ENCODE measurements at regions of chr4 and their contacts with region 1.

Region 1: DNA sequence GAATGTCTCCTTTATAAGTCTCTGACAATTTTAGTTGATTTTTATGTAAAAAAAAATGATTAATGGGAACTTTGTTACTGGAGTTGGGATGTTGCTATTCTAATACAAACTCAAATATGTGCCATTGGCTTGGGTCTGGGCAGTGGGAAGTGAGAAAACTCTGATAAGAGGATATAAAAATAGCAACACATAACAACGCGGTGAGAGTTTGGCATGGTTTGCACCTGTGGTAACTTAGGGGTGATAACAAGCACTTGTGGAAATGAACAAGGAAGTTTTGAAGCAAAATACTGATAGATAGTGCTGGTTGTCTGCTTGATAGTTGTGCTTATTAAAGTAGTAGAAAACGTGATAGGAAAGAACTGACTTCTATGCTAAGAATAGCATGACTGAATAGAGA is 743.3 kb upstream of the AGA start:
- DNase-seq: no peak

Region 2: GRCh38 chr4:178198691-178199090 is 13.2 kb after region 1 on chr4:
- intact Hi-C with region 1: loop called (anchors 2 kb)
- DNase-seq: no peak

Measured in cardiac septum (tissue), 1 donor.